Transverse colon (tissue), 4 donors: ENCODE measurements at regions of chr15 and their contacts with region 1.

Region 1: GRCh38 chr15:54089791-54090190 is 111.5 kb downstream of the UNC13C start:
- DNase-seq: no peak
- H3K4me3 ChIP-seq: no peak overlapping the region
- H3K27ac ChIP-seq: no peak overlapping the region
- H3K4me1 ChIP-seq: no peaks in the 10 kb centered on the region
- H3K27me3 ChIP-seq: no peaks in the 10 kb centered on the region
- CTCF ChIP-seq: no peak
- EP300 ChIP-seq: no peak
- POLR2A ChIP-seq: no peak

Region 2: GRCh38 chr15:53693729-53694475 is 395.9 kb before region 1 on chr15:
- in situ Hi-C with region 1: no loop called
- intact Hi-C with region 1: no loop called
- DNase-seq: peak; percentile 10
- H3K4me3 ChIP-seq: no peak overlapping the region
- H3K27ac ChIP-seq: no peak overlapping the region
- H3K4me1 ChIP-seq: no peaks in the 10 kb centered on the region
- H3K27me3 ChIP-seq: no peaks in the 10 kb centered on the region
- CTCF ChIP-seq: no peak
- EP300 ChIP-seq: no peak
- POLR2A ChIP-seq: no peak

Region 3: DNA sequence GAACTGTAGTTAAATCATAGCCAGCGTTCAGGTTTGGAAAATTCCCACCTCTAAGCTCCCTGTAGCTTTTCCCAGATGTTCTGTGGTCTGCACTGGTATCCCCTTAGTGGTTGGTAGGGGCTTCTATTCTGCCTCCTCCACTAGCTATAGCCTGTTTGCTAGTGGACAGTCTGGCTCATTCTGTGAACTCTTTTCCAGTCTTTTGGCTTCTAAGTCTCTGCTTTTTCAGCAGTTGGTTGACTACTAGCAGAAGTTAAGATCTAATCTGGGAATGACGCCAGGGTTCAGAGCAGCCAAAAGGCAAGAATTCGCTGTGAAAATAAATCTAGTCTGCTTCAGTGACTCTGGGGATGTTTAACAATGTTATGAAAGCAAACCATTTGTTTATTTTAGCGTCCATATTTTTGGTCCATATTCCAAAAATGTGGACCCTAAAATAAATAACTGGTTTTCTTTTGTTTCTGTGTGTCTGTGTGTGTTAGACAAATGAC is 256.6 kb before region 1 on chr15:
- in situ Hi-C with region 1: no loop called
- intact Hi-C with region 1: no loop called
- DNase-seq: no peak
- H3K4me3 ChIP-seq: no peak overlapping the region
- H3K27ac ChIP-seq: peak overlapping the region in 2 of 4 donors; percentile 41 to 60
- H3K4me1 ChIP-seq: peaks cover 13 to 63% (median 29%) of the 10 kb centered on the region in 4 donors
- H3K27me3 ChIP-seq: no peaks in the 10 kb centered on the region
- CTCF ChIP-seq: no peak
- EP300 ChIP-seq: no peak
- POLR2A ChIP-seq: no peak

Region 4: DNA sequence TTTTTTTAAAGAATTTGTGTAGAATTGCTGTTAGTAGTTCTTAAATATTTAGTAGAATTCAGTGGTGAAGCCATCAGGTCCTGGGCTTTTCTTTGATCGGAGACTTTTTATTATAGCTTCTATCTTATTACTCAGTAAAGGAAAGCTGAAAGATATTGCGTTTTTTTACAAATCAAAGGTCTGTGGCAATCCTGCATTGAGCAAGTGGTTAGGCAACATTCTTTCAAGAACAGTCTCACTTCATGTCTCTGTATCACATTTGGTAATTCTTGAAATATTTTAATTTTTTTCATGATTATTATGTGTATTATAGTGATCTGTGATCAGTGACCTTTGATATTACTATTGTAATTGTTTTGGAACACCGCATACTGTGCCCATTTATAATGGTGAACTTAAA is 29.3 kb after region 1 on chr15:
- in situ Hi-C with region 1: no loop called
- intact Hi-C with region 1: no loop called
- DNase-seq: no peak
- H3K4me3 ChIP-seq: no peak overlapping the region
- H3K27ac ChIP-seq: no peak overlapping the region
- H3K4me1 ChIP-seq: no peaks in the 10 kb centered on the region
- H3K27me3 ChIP-seq: no peaks in the 10 kb centered on the region
- CTCF ChIP-seq: no peak
- EP300 ChIP-seq: no peak
- POLR2A ChIP-seq: no peak

Region 5: GRCh38 chr15:54150255-54150654 is 60.5 kb after region 1 on chr15:
- in situ Hi-C with region 1: loop called in 1 of 4 experiments (anchors 10 kb)
- intact Hi-C with region 1: no loop called
- DNase-seq: no peak
- H3K4me3 ChIP-seq: no peak overlapping the region
- H3K27ac ChIP-seq: no peak overlapping the region
- H3K4me1 ChIP-seq: no peaks in the 10 kb centered on the region
- H3K27me3 ChIP-seq: no peaks in the 10 kb centered on the region
- CTCF ChIP-seq: no peak
- EP300 ChIP-seq: no peak
- POLR2A ChIP-seq: no peak